ENCODE measurements at regions of chr11 and their contacts with region 1.

Region 1: DNA sequence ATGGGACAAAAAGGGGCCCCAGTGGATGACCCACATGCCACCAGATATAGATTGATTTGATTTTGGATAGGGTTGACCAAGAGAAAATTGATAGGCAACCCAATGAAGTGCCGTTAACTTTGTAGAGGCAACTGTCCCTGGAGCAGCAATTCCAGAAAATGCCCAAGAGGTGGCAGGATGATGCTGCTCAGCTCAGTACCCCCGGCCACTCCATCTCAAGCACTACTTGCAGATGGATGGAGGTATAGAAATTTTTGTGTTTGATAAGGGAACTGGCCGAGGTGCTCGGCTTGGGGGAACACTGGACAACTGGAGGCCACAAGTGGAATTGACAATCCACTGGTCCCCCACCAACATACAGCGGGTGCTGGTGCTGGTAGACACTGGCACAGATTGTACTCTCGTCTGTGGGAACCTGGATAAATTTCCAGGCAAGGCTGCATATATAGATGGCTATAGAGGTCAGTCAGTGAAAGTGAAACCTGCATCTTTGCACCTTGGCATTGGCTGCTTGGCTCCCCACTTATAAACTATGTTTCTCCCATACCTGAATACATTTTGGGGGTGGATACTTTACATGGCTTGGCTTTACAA is 86.3 kb downstream of the CCDC83 start:
- DNase-seq: peak; percentile 56
- ATAC-seq: peak; percentile 81
- H3K4me3 ChIP-seq: no peak overlapping the region
- H3K27ac ChIP-seq: no peak overlapping the region
- H3K4me1 ChIP-seq: peaks cover 31% of the 10 kb centered on the region
- H3K27me3 ChIP-seq: no peaks in the 10 kb centered on the region
- CTCF ChIP-seq: peak; percentile 77
- EP300 ChIP-seq: no peak
- POLR2A ChIP-seq: no peak
- RAD21 ChIP-seq: peak; percentile 72

Region 2: GRCh38 chr11:86193297-86194095 is 252.0 kb after region 1 on chr11:
- CTCF ChIA-PET with region 1: no interaction called
- POLR2A ChIA-PET with region 1: no interaction called
- in situ Hi-C with region 1: no loop called
- intact Hi-C with region 1: loop called (anchors 1 kb)
- DNase-seq: peak; percentile 76
- ATAC-seq: peak; percentile 100
- H3K4me3 ChIP-seq: peak overlapping the region in 2 of 3 experiments; percentile 21; a peak in 2 of 6 replicates
- H3K27ac ChIP-seq: no peak overlapping the region
- H3K4me1 ChIP-seq: peaks cover 9% of the 10 kb centered on the region; the same call in 1 of the 2 replicates
- H3K27me3 ChIP-seq: no peaks in the 10 kb centered on the region
- CTCF ChIP-seq: peak; percentile 85
- EP300 ChIP-seq: no peak
- POLR2A ChIP-seq: no peak
- RAD21 ChIP-seq: peak; percentile 65; the same call in 1 of the 2 replicates

Region 3: GRCh38 chr11:86218125-86219084 is 276.9 kb after region 1 on chr11:
- CTCF ChIA-PET with region 1: no interaction called
- POLR2A ChIA-PET with region 1: no interaction called
- in situ Hi-C with region 1: loop called (anchors 25 kb)
- intact Hi-C with region 1: no loop called
- DNase-seq: peak; percentile 64
- ATAC-seq: peak; percentile 96
- H3K4me3 ChIP-seq: peak overlapping the region in 2 of 3 experiments; percentile 24 to 31; a peak in 4 of 6 replicates
- H3K27ac ChIP-seq: no peak overlapping the region
- H3K4me1 ChIP-seq: peaks cover 13% of the 10 kb centered on the region
- H3K27me3 ChIP-seq: no peaks in the 10 kb centered on the region; a peak in 2 of 5 replicates
- CTCF ChIP-seq: peak; percentile 83
- EP300 ChIP-seq: no peak
- POLR2A ChIP-seq: no peak
- RAD21 ChIP-seq: peak; percentile 77

Region 4: GRCh38 chr11:86291466-86292262 is 350.2 kb after region 1 on chr11:
- CTCF ChIA-PET with region 1: interaction called, 3 read pairs
- POLR2A ChIA-PET with region 1: no interaction called
- in situ Hi-C with region 1: loop called (anchors 10 kb)
- intact Hi-C with region 1: loop called (anchors 2 kb)
- DNase-seq: peak; percentile 70
- ATAC-seq: peak; percentile 91
- H3K4me3 ChIP-seq: no peak overlapping the region
- H3K27ac ChIP-seq: no peak overlapping the region
- H3K4me1 ChIP-seq: peaks cover 16% of the 10 kb centered on the region
- H3K27me3 ChIP-seq: no peaks in the 10 kb centered on the region
- CTCF ChIP-seq: peak; percentile 63
- EP300 ChIP-seq: 0 out of 4 replicates have a peak, but pooled peaks of 1 of the 2 experiments have one; percentile 12
- POLR2A ChIP-seq: no peak
- RAD21 ChIP-seq: peak; percentile 16; the same call in 1 of the 2 replicates

Measured in HepG2 (cell line).